ENCODE measurements at regions of chr7 and their contacts with region 1.

Region 1: DNA sequence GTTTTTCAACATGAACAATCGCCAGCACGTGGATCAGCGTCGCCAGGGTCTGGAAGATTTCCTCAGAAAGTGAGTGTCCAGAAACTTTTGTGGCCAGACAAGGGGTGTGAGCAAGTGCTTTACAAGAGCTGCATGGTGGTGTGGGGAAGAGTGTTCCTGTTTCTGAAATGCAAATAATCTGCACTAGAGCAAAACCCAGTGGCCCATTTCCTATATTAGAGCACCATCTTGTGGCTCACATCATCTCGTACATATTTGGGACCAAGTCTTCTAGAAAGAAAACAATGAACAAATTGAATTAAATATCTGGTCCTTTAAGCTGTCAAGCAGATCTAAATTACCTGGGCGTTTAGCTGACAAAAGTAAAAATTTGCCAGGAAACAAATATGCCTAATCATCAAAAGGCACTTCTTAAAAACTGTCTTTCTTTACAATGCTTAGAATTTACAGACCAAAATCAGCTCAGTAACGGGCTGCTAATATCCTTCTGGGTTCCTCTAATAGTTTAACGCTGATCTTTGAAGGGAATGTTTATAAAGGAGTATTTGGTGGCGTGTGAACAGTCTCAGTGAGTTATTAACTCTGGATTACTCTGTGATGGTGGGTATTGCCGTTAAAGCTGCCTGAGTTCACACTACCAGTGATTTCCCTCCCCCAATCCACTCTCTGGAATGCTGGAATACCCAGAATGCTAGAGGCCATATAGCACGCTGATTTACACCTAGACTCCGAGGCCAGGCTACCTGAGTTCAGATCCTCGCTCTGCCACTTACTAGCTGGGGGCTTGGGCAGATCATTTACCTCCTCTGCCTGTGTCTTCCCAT is 73.6 kb downstream of the SNX10 start:
- DNase-seq: peak; percentile 91

Region 2: DNA sequence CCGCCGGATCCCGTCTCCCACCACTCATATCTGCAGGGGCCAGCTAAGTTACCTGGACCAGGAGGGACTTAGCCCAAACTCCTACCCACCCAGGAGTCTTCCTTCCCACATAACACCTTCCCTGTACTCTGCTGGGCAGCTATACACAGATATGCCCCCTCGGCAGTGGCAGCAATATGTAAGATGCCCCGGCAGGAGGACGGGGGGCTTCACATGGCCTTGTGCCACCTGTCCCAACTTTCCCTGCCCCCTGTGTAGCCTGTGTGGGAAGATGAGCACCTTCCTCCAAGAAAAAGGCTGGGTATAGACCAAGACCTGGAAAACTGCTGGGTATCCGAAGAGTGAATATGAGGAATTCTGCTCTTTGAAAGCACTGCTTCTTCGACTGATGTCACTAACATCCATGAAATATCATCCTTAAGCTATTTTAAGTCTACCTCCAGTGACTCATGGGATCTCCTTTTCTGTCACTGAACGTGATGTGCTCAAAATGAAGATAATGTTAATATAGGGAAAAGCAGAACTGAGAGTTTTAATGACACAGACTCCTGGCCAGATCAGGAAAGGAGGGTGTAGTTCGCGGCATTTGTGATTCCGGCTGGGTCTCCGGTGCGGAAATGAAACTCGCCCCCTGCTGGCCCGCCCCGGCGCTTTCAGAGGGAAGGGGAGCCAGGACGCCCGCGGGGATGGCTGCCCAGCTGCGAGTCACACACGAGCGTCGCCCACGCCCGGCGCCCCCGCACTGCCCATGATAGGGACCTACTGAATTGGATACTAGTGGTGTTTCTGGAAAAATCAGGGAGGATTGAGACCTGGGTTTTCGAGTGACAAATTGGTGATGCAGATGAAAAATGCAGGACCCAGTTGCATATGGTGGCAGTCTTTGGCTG is 470.1 kb before region 1 on chr7:
- in situ Hi-C with region 1: loop called (anchors 25 kb)
- DNase-seq: peak; percentile 92

Region 3: GRCh38 chr7:26078437-26079336 is 286.6 kb before region 1 on chr7:
- in situ Hi-C with region 1: loop called (anchors 25 kb)
- DNase-seq: peak; percentile 87

Region 4: GRCh38 chr7:26534649-26535482 is 169.6 kb after region 1 on chr7:
- in situ Hi-C with region 1: no loop called
- DNase-seq: no peak

Region 5: DNA sequence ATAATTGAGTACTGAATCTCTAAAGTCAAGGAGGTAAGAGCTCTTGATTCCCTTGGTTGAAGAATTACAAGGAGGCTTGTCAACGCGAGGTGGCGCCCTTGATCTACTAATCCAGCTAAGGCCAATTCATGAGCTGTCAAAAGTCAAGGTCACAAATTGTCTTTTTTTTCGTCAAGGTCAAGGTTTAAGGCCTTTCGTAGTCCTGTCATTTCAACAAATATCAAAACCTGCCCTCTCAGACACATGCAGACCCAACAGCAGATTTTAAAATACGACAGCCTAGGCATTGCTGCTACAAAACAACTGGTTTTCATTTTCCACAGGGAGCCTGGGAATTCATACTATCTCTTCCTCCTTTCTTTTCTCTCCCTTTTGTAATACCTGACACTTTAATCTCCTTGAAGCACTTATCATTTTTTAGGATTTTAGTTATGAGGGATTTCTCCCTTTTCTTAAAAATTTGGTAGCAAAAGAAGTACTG is 831.0 kb after region 1 on chr7:
- in situ Hi-C with region 1: loop called (anchors 25 kb)
- DNase-seq: peak; percentile 84